T-cell (primary cell): ENCODE measurements at regions of chr20 and their contacts with region 1.

Region 1: GRCh38 chr20:6074145-6074561 is 20.3 kb upstream of the LRRN4 start:
- DNase-seq: peak in 1 of 35 experiments; percentile 28
- ATAC-seq: peak in 3 of 4 experiments; percentile 37 to 66 (median 56)
- H3K4me3 ChIP-seq: no peak overlapping the region
- H3K4me3 Mint-ChIP-seq: no peak overlapping the region
- H3K27ac ChIP-seq: no peak overlapping the region
- H3K27ac Mint-ChIP-seq: no peak overlapping the region
- H3K4me1 ChIP-seq: peaks cover 0 to 4% of the 10 kb centered on the region in 2 experiments
- H3K4me1 Mint-ChIP-seq: peaks cover 0 to 6% (median 0%) of the 10 kb centered on the region in 3 donors
- H3K27me3 ChIP-seq: peaks cover 0 to 14% of the 10 kb centered on the region in 2 experiments
- H3K27me3 Mint-ChIP-seq: peaks cover 0 to 8% of the 10 kb centered on the region in 2 donors

Region 2: DNA sequence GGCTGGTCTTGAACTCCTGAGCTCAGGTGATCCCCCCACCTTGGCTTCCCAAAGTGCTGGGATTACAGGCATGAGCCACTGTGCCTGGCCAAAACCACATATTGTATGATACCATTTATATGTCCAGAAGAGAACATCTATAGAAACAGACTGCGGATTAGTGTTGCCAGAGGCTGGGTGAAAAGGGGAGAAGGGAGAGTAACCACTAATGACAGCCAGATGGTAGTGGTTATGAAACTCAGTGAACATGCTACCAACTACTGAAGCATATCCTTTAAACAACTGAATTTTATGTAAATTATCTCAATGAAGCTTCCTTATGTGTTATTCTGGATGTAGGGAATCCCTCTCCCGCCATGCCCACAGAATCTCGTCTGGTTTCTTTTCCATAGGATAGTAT is 1088.5 kb before region 1 on chr20:
- CTCF ChIA-PET with region 1: interaction called in 1 of 2 experiments, 11 read pairs
- POLR2A ChIA-PET with region 1: no interaction called
- DNase-seq: no peak
- ATAC-seq: no peak
- H3K4me3 ChIP-seq: no peak overlapping the region
- H3K4me3 Mint-ChIP-seq: no peak overlapping the region
- H3K27ac ChIP-seq: no peak overlapping the region
- H3K27ac Mint-ChIP-seq: no peak overlapping the region
- H3K4me1 ChIP-seq: peaks cover 0 to 3% of the 10 kb centered on the region in 2 experiments
- H3K4me1 Mint-ChIP-seq: peaks cover 31 to 39% (median 38%) of the 10 kb centered on the region in 3 donors
- H3K27me3 ChIP-seq: no peaks in the 10 kb centered on the region
- H3K27me3 Mint-ChIP-seq: no peaks in the 10 kb centered on the region

Region 3: GRCh38 chr20:6533761-6534479 is 459.8 kb after region 1 on chr20:
- CTCF ChIA-PET with region 1: no interaction called
- POLR2A ChIA-PET with region 1: no interaction called
- DNase-seq: no peak
- ATAC-seq: no peak
- H3K4me3 ChIP-seq: no peak overlapping the region
- H3K4me3 Mint-ChIP-seq: no peak overlapping the region
- H3K27ac ChIP-seq: no peak overlapping the region
- H3K27ac Mint-ChIP-seq: no peak overlapping the region
- H3K4me1 ChIP-seq: no peaks in the 10 kb centered on the region
- H3K4me1 Mint-ChIP-seq: no peaks in the 10 kb centered on the region
- H3K27me3 ChIP-seq: no peaks in the 10 kb centered on the region
- H3K27me3 Mint-ChIP-seq: no peaks in the 10 kb centered on the region